Caco-2 (cell line): ENCODE measurements at regions of chr1 and their contacts with region 1.

Region 1: DNA sequence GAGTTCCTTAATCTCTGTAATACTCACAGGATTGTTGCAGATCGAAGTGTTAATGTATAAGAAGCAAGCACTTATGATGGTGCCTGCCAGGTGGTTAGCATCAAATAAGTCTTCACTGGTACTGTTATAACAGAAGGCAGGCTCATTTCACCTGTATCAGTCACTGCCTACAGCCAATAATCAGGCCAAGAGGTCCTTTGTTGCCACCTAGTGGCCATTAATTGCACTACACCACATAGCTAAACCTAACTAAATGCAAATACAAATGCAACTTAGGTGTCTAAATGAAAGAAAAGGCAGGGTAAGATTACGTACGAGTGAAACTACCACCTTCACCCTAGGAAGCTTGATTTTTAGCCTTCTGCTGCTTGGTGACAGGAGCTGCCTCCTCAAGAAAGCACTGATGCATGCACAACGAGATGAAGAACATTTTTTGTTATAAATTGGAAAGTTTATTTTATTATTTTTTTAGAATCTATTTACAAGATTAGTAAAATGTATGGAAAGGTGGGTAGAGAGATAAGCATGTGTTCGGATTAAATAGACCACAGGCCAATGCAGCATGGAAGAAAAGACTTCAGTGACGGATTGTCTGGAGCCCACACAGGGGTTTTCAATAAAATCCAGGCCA is 334.8 kb upstream of the CAMK1G start:
- DNase-seq: peak; percentile 67 to 71
- H3K4me3 ChIP-seq: no peak overlapping the region
- H3K4me3 Mint-ChIP-seq: no peak overlapping the region
- H3K27ac Mint-ChIP-seq: no peak overlapping the region
- H3K4me1 ChIP-seq: no peaks in the 10 kb centered on the region
- H3K4me1 Mint-ChIP-seq: no peaks in the 10 kb centered on the region
- H3K27me3 ChIP-seq: no peaks in the 10 kb centered on the region
- H3K27me3 Mint-ChIP-seq: peaks cover 3% of the 10 kb centered on the region
- CTCF ChIP-seq: peak; percentile 88

Region 2: GRCh38 chr1:209086486-209087192 is 162.1 kb before region 1 on chr1:
- CTCF ChIA-PET with region 1: no interaction called
- POLR2A ChIA-PET with region 1: no interaction called
- intact Hi-C with region 1: no loop called
- DNase-seq: no peak
- H3K4me3 ChIP-seq: no peak overlapping the region
- H3K4me3 Mint-ChIP-seq: no peak overlapping the region
- H3K27ac Mint-ChIP-seq: no peak overlapping the region
- H3K4me1 ChIP-seq: no peaks in the 10 kb centered on the region
- H3K4me1 Mint-ChIP-seq: no peaks in the 10 kb centered on the region
- H3K27me3 ChIP-seq: no peaks in the 10 kb centered on the region
- H3K27me3 Mint-ChIP-seq: peaks cover 6% of the 10 kb centered on the region
- CTCF ChIP-seq: no peak

Region 3: DNA sequence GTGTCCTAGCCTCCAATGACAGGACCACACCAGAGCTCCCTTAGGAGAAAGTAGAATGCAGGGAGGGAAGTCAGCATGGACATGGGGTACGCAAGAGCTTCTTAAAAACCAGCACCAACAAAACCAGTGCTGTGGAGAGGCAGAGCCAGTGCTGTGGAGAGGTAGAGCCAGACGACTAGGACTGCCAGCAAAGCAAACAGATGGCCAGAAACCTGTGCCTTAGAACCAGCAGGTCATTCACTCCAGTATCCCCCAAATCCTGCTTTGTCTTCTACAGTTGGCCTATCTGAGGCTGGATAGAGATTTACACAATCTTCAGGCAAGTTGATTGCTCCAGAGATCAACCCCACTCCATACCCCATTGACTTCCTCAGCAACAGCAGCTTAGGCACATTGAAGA is 125.2 kb before region 1 on chr1:
- CTCF ChIA-PET with region 1: no interaction called
- POLR2A ChIA-PET with region 1: no interaction called
- intact Hi-C with region 1: no loop called
- DNase-seq: no peak
- H3K4me3 ChIP-seq: no peak overlapping the region
- H3K4me3 Mint-ChIP-seq: no peak overlapping the region
- H3K27ac Mint-ChIP-seq: no peak overlapping the region
- H3K4me1 ChIP-seq: no peaks in the 10 kb centered on the region
- H3K4me1 Mint-ChIP-seq: no peaks in the 10 kb centered on the region
- H3K27me3 ChIP-seq: no peaks in the 10 kb centered on the region
- H3K27me3 Mint-ChIP-seq: peaks cover 29% of the 10 kb centered on the region
- CTCF ChIP-seq: no peak

Region 4: DNA sequence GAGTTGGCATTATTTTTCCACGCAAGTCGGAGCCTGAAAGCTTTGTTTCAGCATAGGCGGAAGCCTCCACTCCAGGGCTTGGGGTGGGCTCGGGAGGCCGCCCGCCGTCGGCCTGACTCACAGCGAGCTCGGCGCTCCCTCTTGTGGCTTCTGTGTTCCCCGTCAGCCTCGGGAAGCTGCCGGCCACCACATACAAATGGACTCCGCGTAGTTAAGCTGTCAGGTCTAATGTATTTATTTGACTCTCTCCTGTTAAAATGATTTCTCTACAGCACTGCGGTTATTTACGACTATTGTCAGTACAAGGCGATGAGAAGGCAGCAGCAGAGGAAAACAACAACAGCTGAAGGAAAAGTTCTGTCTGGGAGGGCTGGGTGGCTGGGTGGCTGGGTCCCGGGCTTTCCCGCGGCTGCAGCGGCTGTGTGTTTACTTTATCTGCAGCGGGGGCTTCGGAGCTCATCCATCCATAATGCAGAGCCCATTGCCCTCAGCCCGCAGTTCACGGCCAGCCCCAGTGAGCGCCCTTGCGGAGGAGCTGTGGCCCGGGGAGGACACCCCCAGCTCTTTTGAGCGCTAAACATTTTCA is 41.0 kb before region 1 on chr1:
- CTCF ChIA-PET with region 1: interaction called, 8 read pairs
- POLR2A ChIA-PET with region 1: no interaction called
- intact Hi-C with region 1: loop called (anchors 1 kb)
- DNase-seq: peak; percentile 59 to 66
- H3K4me3 ChIP-seq: peak overlapping the region; percentile 10; the same call in 1 of the 2 replicates
- H3K4me3 Mint-ChIP-seq: peak overlapping the region; percentile 62
- H3K27ac Mint-ChIP-seq: no peak overlapping the region
- H3K4me1 ChIP-seq: no peaks in the 10 kb centered on the region
- H3K4me1 Mint-ChIP-seq: no peaks in the 10 kb centered on the region
- H3K27me3 ChIP-seq: peaks cover 1% of the 10 kb centered on the region
- H3K27me3 Mint-ChIP-seq: peaks cover 14% of the 10 kb centered on the region
- CTCF ChIP-seq: peak; percentile 55 to 91

Region 5: GRCh38 chr1:209435654-209436566 is 187.1 kb after region 1 on chr1:
- CTCF ChIA-PET with region 1: interaction called, 9 read pairs
- POLR2A ChIA-PET with region 1: no interaction called
- intact Hi-C with region 1: loop called (anchors 1 kb)
- DNase-seq: peak; percentile 85 to 91
- H3K4me3 ChIP-seq: no peak overlapping the region
- H3K4me3 Mint-ChIP-seq: no peak overlapping the region
- H3K27ac Mint-ChIP-seq: peak overlapping the region; percentile 0
- H3K4me1 ChIP-seq: peaks cover 45% of the 10 kb centered on the region
- H3K4me1 Mint-ChIP-seq: peaks cover 19% of the 10 kb centered on the region
- H3K27me3 ChIP-seq: no peaks in the 10 kb centered on the region
- H3K27me3 Mint-ChIP-seq: no peaks in the 10 kb centered on the region
- CTCF ChIP-seq: peak; percentile 84 to 94

Region 6: GRCh38 chr1:209490013-209490412 is 241.2 kb after region 1 on chr1:
- CTCF ChIA-PET with region 1: interaction called, 6 read pairs
- POLR2A ChIA-PET with region 1: no interaction called
- intact Hi-C with region 1: loop called (anchors 1 kb)
- DNase-seq: no peak
- H3K4me3 ChIP-seq: no peak overlapping the region
- H3K4me3 Mint-ChIP-seq: no peak overlapping the region
- H3K27ac Mint-ChIP-seq: no peak overlapping the region
- H3K4me1 ChIP-seq: no peaks in the 10 kb centered on the region
- H3K4me1 Mint-ChIP-seq: no peaks in the 10 kb centered on the region
- H3K27me3 ChIP-seq: no peaks in the 10 kb centered on the region
- H3K27me3 Mint-ChIP-seq: peaks cover 6% of the 10 kb centered on the region
- CTCF ChIP-seq: peak; percentile 46 to 60

Region 7: GRCh38 chr1:209513226-209513625 is 264.5 kb after region 1 on chr1:
- CTCF ChIA-PET with region 1: no interaction called
- POLR2A ChIA-PET with region 1: no interaction called
- intact Hi-C with region 1: loop called (anchors 1 kb)
- DNase-seq: peak; percentile 35 to 38
- H3K4me3 ChIP-seq: no peak overlapping the region
- H3K4me3 Mint-ChIP-seq: no peak overlapping the region
- H3K27ac Mint-ChIP-seq: no peak overlapping the region
- H3K4me1 ChIP-seq: no peaks in the 10 kb centered on the region
- H3K4me1 Mint-ChIP-seq: no peaks in the 10 kb centered on the region
- H3K27me3 ChIP-seq: no peaks in the 10 kb centered on the region
- H3K27me3 Mint-ChIP-seq: peaks cover 9% of the 10 kb centered on the region
- CTCF ChIP-seq: peak; percentile 59 to 64